Body of pancreas (tissue), 4 donors: ENCODE measurements at regions of chr12 and their contacts with region 1.

Region 1: DNA sequence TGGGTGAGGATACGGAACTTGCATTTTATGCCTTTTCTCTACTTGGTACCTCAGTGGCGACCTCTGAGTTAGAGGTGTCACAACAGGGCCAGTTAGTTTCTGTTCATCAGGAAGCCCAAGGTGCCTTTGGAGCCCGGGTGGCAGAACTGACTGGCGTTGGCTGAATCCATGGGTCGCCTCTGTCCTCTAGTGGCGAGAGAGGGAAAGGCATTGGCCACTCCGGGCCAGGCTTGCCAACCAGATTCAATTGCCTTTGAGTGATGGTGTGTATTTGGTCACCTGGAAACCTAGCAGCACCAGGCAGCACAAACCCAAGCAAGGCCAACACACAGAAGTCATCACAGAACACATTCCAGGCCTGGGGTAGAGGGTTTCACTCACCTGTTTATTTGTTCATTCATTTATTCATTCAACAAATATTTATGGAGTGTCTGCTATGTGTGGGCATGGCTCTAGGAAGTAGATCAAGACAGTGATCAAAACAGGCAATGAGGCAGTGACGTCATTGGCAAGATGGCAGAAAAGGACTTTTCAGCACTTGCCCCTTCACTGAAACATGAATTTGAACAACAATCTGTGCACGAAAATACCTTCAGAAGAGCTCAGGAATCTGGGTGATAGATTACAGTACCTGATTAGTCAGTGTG is 40.5 kb upstream of the KCNA5 start:
- DNase-seq: peak; percentile 60 to 77 (median 72)
- ATAC-seq: peak; percentile 83
- H3K4me3 ChIP-seq: no peak overlapping the region
- H3K27ac ChIP-seq: no peak overlapping the region
- H3K4me1 ChIP-seq: no peaks in the 10 kb centered on the region
- H3K27me3 ChIP-seq: peaks cover 0 to 5% of the 10 kb centered on the region in 2 donors
- CTCF ChIP-seq: peak; percentile 73 to 93 (median 90)
- POLR2A ChIP-seq: no peak

Region 2: GRCh38 chr12:4857472-4858291 is 145.5 kb before region 1 on chr12:
- intact Hi-C with region 1: loop called (anchors 10 kb)
- DNase-seq: peak; percentile 68 to 81 (median 74)
- ATAC-seq: peak; percentile 82
- H3K4me3 ChIP-seq: no peak overlapping the region
- H3K27ac ChIP-seq: no peak overlapping the region
- H3K4me1 ChIP-seq: peaks cover 13% of the 10 kb centered on the region
- H3K27me3 ChIP-seq: no peaks in the 10 kb centered on the region
- CTCF ChIP-seq: peak; percentile 72 to 92 (median 76)
- POLR2A ChIP-seq: no peak